ENCODE measurements at regions of chr2 and their contacts with region 1.

Region 1: DNA sequence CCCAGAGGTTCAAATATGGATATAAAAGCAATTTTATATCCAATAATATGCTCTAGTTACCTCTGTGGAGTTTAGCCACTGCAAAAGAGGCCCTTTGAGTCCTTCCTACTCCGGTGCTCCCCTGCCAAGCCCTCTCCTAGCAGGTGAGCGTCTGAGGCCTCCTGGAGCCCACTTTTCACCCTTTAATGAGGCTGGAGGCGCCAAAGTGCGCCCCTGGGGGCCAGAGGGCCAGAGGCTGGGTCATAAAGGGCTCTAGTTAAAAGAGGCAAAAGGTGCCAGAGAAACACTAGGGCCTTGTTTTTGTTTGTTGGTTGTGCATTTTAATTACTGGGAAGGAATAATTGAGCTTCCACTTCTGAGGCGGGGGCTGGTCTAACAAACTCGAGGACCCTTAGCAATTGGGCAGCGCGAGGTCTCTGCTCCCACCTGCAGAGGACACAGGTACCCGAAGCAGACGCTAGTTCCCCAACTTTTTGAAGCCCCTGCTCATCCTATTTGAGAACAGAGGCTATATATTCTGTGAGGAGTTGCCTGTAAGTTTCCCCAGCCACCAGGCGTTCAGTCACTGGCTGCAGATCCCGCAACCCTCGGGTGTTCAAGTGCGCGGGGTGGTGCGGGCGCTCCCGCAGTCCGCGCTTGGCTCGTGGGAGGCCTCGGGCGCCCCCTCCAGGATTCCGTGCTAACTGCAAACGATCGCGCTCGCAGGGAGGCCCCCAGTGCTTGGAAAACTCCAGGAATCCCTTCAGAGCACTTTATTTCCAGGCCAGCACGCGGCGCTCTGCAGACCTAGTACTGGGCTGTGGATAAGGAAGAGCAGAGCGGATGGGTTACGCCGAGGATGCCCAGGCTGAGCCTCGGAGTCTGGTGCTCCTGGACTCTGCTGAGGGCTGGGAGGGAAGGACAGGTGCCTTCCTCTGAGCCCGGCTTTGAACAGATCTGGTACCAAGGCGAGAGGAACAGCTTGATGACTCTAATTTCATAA is 14.1 kb downstream of the MSGN1 start:
- DNase-seq: peak; percentile 62
- CTCF ChIP-seq: peak; percentile 95

Region 2: GRCh38 chr2:17719562-17720371 is 110.6 kb before region 1 on chr2:
- in situ Hi-C with region 1: loop called (anchors 10 kb)
- DNase-seq: peak; percentile 19
- CTCF ChIP-seq: peak; percentile 74

Measured in GM13977 (cell line).